ENCODE measurements at regions of chr15 and their contacts with region 1.

Region 1: GRCh38 chr15:79364571-79365240 is 53.8 kb downstream of the TMED3 start:
- DNase-seq: no peak
- ATAC-seq: no peak
- H3K4me3 ChIP-seq: no peak overlapping the region
- H3K27ac ChIP-seq: no peak overlapping the region
- H3K4me1 ChIP-seq: no peaks in the 10 kb centered on the region
- H3K27me3 ChIP-seq: no peaks in the 10 kb centered on the region

Region 2: DNA sequence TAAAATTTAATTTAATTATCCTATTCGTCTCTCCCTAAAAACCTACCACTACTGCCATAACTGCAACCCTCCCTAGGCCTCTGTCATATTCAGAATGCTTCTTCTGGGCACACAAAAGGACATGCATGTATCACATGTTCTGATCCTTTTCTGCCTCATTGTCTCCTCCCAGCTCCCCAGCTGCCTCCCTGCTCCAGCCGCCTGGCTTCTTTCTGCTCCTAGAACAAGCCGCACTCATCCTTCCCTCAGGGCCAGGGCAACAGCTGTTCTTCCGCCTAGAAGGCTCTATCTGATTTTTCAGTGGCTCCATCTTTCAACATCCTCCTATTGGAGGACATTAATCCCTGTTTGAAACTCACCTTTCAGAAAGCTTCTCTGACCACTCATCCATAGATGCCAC is 15.2 kb before region 1 on chr15:
- intact Hi-C with region 1: no loop called
- DNase-seq: no peak
- ATAC-seq: no peak
- H3K4me3 ChIP-seq: no peak overlapping the region
- H3K27ac ChIP-seq: no peak overlapping the region
- H3K4me1 ChIP-seq: no peaks in the 10 kb centered on the region
- H3K27me3 ChIP-seq: no peaks in the 10 kb centered on the region

Region 3: GRCh38 chr15:79756365-79756764 is 391.7 kb after region 1 on chr15:
- intact Hi-C with region 1: loop called in 1 of 2 experiments (anchors 10 kb)
- DNase-seq: no peak
- ATAC-seq: no peak
- H3K4me3 ChIP-seq: no peak overlapping the region
- H3K27ac ChIP-seq: no peak overlapping the region
- H3K4me1 ChIP-seq: no peaks in the 10 kb centered on the region
- H3K27me3 ChIP-seq: no peaks in the 10 kb centered on the region